GM13976 (cell line): ENCODE measurements at regions of chr11 and their contacts with region 1.

Region 1: DNA sequence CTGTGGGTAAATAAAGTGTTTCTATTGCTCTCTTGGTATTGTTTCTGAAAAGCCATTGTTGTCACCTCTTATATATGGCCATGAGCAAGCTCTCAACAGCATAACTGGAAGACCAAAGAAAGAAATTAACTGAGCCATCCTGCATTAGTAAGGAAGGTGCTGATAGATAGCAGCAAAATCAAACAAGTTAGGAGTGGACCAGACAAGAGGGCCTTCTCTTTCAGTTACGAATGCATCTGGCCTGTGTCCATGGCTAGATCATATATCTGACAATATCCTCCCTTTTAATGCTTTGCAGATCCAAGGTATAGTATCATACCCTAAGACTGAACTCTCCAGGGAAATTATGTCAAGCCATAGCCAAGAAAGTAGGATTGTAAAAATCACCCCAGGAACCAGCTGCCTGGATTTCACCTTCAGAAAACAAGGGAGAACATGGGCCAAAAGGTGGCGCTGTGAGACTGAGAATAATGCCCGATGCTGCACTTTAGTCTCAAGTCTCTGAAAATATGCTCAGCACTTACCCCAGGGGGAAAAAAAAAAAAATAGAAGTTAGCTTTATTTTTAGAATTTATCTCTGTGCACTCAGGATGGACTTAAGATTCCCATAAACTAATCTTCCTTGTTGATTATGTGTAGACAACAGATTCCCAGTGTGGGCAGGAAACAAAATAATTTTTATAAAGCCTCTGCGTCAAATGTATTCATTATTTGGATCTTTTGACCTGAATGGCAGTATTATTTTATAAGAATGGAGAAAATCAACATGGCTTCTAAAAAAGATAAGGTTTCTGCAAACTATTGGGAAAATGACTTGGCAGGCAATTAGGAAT is 415.1 kb downstream of the ETS1 start:
- DNase-seq: peak; percentile 81
- CTCF ChIP-seq: peak; percentile 73

Region 2: DNA sequence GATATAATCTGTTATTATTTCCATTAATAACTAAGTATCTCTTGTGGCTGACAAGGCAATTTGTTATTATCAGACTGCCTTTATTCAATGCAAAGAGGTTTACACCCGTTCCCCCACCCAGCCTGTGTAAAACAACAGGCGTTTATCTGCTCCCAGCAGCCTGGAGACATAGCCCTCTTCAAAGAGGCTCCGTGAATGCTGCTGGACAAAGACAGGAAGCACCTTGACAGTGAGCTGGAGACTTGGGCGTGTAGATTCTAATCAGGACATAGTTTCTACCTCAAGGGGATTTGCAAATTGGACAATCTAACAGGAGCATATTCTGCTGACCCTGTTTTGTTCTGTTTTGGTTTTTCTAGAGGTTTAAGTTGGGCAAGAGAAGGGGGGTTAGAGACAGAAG is 438.7 kb before region 1 on chr11:
- in situ Hi-C with region 1: no loop called
- DNase-seq: no peak
- CTCF ChIP-seq: no peak

Region 3: GRCh38 chr11:128279866-128280265 is 107.6 kb after region 1 on chr11:
- in situ Hi-C with region 1: loop called (anchors 10 kb)
- DNase-seq: no peak
- CTCF ChIP-seq: no peak

Region 4: DNA sequence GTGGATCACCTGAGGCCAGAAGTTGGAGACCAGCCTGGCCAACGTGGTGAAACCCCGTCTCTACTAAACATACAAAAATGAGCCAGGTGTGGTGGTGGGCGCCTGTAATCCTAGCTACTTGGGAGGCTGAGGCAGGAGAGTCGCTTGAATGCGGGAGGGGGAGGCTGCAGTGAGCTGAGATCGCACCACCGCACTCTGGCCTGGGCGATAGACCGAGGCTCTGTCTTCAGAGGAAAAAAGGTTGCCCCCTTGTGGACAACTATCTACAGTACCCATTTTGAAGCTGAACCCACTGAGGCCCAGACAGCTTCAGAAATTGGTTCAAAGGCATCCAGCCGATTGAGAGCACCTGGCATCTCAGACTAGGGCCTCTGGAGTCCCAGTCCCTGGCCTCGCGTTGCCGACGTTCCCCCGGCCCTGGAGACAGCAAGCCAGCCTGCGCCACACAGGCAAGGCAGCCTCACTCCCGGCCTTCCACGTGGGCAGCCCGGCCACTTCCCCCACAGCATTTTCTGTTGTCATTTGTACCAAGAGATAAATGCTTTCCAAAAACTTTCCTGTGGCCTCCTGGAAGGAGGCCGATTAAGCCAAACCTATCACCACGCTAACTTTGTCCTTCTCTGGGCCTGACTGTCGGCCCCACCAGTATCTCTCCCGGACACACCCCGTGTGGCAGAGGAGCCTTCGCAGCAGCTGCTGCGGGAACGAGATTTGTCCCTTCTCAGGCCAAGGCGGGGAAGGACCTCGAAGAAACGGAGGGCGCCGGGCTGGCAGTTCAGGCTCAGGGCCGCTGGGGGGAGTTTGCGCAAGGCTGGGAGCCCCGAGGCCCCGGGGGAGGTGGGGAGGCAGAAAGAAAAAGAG is 604.4 kb after region 1 on chr11:
- in situ Hi-C with region 1: no loop called
- DNase-seq: peak; percentile 74
- CTCF ChIP-seq: no peak

Region 5: GRCh38 chr11:128831174-128832120 is 659.2 kb after region 1 on chr11:
- in situ Hi-C with region 1: loop called (anchors 10 kb)
- DNase-seq: peak; percentile 70
- CTCF ChIP-seq: peak; percentile 77